Calu3 (cell line): ENCODE measurements at regions of chr11 and their contacts with region 1.

Region 1: GRCh38 chr11:34308913-34309585 is 48.8 kb downstream of the ABTB2 start:
- DNase-seq: peak; percentile 34
- H3K4me3 Mint-ChIP-seq: peak overlapping the region; percentile 34
- H3K27ac Mint-ChIP-seq: peak overlapping the region; percentile 60
- H3K4me1 Mint-ChIP-seq: peaks cover 45% of the 10 kb centered on the region
- H3K27me3 Mint-ChIP-seq: no peaks in the 10 kb centered on the region
- CTCF ChIP-seq: no peak

Region 2: DNA sequence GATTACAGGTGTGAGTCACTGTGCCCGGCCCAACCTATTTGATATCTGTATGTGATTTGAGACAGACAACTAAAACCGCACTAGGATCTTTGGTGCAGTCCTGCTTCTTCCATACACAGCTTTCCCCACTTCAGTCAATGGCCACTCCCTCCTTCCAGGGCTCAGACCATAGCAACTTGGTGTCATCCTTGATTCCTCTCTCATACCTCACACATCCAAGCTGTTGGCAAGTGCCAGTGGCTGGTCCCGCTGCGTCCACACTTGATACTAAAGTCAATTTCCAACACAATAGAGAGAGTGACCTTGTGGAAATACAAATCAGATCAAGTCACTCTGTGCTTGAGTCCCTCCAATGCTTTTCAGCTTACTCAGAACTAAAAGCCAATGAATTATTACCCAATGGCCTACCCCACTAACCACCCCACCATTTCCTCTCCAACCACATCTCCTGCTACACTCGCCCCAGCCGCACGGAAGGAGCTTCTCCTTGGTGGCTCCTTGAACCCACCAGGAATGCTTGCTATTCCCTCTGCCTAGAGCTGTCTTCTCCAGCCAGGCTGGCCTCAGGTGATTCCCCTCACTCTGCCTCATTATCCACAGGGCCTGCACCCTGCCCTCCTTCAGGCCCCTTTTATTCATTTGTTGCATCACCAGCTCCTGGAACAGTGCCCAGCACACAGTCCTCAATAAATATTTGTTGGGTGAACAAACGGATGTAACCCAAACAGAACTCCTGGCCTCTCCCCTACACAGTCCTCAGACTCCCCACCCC is 35.9 kb after region 1 on chr11:
- CTCF ChIA-PET with region 1: no interaction called
- intact Hi-C with region 1: loop called (anchors 5 kb)
- DNase-seq: peak; percentile 82
- H3K4me3 Mint-ChIP-seq: peak overlapping the region; percentile 52
- H3K27ac Mint-ChIP-seq: peak overlapping the region; percentile 92
- H3K4me1 Mint-ChIP-seq: peaks cover 84% of the 10 kb centered on the region
- H3K27me3 Mint-ChIP-seq: no peaks in the 10 kb centered on the region
- CTCF ChIP-seq: no peak